A673 (cell line): ENCODE measurements at regions of chr1 and their contacts with region 1.

Region 1: DNA sequence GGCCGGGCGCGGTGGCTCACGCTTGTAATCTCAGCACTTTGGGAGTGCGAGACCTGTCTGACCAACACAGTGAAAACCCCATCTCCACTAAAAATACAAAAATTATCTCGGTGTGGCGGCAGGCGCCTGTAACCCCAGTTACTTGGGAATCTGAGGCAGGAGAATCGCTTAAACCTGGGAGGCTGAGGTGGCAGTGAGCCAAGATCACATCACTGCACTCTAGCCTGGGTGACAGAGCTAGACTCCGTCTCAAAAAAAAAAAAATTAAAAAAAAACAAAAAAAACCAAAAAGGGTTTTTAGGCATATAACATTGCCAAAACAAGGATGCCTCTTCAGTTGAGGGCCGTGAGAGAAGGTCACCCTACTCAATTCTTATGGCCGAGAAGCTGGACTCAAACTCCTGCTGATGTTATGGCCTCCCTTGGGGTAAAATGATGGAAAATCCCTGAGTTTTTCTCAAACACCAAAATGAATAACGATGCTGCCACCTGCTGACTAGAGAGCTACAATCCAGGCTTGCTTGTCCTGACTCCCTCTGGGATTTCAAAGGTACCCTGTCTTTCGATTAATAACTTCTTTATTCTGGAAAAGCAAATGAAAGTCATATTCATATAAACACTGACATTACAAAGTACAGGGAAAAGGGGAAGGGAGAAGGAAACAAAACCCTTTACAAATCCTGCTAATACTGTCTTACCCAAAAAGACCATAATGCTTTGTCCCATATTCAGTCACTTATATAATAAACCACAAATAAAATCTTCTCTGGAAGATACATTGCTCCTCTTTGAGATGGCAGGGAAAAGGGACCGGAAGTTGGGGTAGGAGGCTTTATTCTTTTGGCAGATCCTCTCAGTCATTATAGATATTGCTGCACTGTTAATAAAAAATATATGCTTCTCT is 10.7 kb downstream of the RAB42 start:
- DNase-seq: peak; percentile 89
- H3K4me3 ChIP-seq: no peak overlapping the region
- H3K27ac ChIP-seq: no peak overlapping the region
- H3K4me1 ChIP-seq: peaks cover 6% of the 10 kb centered on the region
- H3K27me3 ChIP-seq: no peaks in the 10 kb centered on the region
- CTCF ChIP-seq: peak; percentile 87

Region 2: GRCh38 chr1:28359592-28360239 is 243.1 kb before region 1 on chr1:
- CTCF ChIA-PET with region 1: interaction called, 22 read pairs
- POLR2A ChIA-PET with region 1: no interaction called
- intact Hi-C with region 1: loop called (anchors 2 kb)
- DNase-seq: peak; percentile 83
- H3K4me3 ChIP-seq: no peak overlapping the region
- H3K27ac ChIP-seq: no peak overlapping the region
- H3K4me1 ChIP-seq: no peaks in the 10 kb centered on the region
- H3K27me3 ChIP-seq: no peaks in the 10 kb centered on the region
- CTCF ChIP-seq: peak; percentile 76

Region 3: DNA sequence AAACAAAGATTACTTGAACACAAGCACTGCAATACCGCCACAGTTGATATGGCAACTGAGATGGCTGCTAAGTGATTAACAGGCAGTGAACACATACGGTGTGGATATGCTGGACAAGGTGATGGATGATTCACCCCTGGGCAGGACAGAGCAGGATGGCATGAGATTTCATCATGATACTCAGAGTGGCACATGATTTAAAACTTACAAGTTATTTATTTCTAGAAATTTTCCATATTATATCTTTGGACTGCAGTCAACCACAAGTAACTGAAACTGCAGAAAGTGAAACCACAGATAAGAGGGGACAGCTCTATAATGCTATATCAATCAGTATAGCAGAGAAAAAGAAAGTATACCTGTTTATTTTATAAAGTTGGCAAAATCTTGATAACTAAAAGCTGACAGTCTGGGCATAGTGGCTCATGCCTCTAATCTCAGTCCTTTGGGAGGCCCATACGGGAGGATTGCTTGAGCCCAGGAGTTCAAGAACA is 185.3 kb before region 1 on chr1:
- CTCF ChIA-PET with region 1: interaction called, 3 read pairs
- POLR2A ChIA-PET with region 1: no interaction called
- intact Hi-C with region 1: loop called (anchors 5 kb)
- DNase-seq: no peak
- H3K4me3 ChIP-seq: no peak overlapping the region
- H3K27ac ChIP-seq: no peak overlapping the region
- H3K4me1 ChIP-seq: peaks cover 25% of the 10 kb centered on the region
- H3K27me3 ChIP-seq: no peaks in the 10 kb centered on the region
- CTCF ChIP-seq: no peak

Region 4: GRCh38 chr1:28518000-28518744 is 84.6 kb before region 1 on chr1:
- CTCF ChIA-PET with region 1: interaction called, 7 read pairs
- POLR2A ChIA-PET with region 1: no interaction called
- intact Hi-C with region 1: loop called (anchors 1 kb)
- DNase-seq: peak; percentile 95
- H3K4me3 ChIP-seq: peak overlapping the region; percentile 66
- H3K27ac ChIP-seq: peak overlapping the region; percentile 96
- H3K4me1 ChIP-seq: peaks cover 14% of the 10 kb centered on the region
- H3K27me3 ChIP-seq: no peaks in the 10 kb centered on the region
- CTCF ChIP-seq: peak; percentile 95

Region 5: DNA sequence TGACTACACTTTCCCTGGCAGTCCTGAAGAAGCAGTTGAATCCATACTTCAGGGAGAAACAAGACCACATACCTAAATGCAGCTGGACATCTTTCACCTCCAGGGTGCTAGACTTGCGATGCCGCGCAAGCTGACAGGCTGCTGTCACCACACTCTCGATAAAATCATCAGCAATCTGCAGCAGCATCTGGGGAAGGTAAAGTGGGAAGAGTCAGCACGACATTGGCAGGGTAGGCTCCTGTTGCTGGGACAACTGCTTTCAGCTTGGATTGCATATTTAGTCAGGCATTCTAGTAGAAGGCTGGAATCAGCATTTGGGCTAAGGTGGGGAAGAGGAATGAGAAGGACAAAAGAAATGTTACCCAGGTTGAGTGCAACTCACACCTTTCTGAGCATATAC is 10.4 kb after region 1 on chr1:
- CTCF ChIA-PET with region 1: no interaction called
- POLR2A ChIA-PET with region 1: interaction called, 21 read pairs
- intact Hi-C with region 1: no loop called
- DNase-seq: no peak
- H3K4me3 ChIP-seq: no peak overlapping the region
- H3K27ac ChIP-seq: no peak overlapping the region
- H3K4me1 ChIP-seq: no peaks in the 10 kb centered on the region
- H3K27me3 ChIP-seq: no peaks in the 10 kb centered on the region
- CTCF ChIP-seq: no peak

Region 6: DNA sequence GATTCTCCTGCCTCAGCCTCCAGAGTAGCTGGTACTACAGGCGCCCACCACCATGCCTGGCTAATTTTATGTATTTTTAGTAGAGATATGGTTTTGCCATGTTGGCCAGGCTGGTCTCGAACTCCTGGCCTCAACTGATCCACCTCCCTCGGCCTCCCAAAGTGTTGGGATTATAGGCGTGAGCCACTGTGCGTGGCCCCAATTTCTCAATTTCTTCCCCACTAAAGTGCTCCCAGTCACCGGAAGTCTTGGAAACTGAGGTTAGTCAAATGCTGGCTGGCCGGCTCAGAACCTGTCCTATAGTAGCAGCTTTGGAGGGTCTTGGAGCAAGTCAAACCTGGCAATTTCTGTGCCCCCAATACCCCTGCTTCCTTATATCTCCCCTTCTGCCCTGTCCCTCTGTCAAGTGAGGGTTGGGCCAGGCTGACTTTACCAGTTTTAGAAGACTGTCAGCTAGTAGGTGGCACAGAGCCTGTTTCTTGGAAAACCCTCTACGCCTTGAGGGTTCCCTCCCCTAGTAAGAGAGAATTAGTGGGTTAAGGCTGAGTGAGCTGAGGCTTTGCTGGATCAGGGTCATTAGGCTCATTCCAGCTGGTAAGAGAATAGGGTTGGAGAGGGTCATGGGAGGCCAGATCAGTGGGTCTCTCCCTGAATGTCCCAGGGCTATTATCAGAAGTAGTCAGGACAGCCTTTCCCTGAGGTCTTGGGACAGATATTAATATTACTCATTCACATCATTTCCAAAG is 303.3 kb after region 1 on chr1:
- CTCF ChIA-PET with region 1: interaction called, 17 read pairs
- POLR2A ChIA-PET with region 1: no interaction called
- intact Hi-C with region 1: no loop called
- DNase-seq: no peak
- H3K4me3 ChIP-seq: no peak overlapping the region
- H3K27ac ChIP-seq: no peak overlapping the region
- H3K4me1 ChIP-seq: peaks cover 14% of the 10 kb centered on the region
- H3K27me3 ChIP-seq: no peaks in the 10 kb centered on the region
- CTCF ChIP-seq: no peak